Heart right ventricle (tissue), 16 donors: ENCODE measurements at regions of chr12 and their contacts with region 1.

Region 1: DNA sequence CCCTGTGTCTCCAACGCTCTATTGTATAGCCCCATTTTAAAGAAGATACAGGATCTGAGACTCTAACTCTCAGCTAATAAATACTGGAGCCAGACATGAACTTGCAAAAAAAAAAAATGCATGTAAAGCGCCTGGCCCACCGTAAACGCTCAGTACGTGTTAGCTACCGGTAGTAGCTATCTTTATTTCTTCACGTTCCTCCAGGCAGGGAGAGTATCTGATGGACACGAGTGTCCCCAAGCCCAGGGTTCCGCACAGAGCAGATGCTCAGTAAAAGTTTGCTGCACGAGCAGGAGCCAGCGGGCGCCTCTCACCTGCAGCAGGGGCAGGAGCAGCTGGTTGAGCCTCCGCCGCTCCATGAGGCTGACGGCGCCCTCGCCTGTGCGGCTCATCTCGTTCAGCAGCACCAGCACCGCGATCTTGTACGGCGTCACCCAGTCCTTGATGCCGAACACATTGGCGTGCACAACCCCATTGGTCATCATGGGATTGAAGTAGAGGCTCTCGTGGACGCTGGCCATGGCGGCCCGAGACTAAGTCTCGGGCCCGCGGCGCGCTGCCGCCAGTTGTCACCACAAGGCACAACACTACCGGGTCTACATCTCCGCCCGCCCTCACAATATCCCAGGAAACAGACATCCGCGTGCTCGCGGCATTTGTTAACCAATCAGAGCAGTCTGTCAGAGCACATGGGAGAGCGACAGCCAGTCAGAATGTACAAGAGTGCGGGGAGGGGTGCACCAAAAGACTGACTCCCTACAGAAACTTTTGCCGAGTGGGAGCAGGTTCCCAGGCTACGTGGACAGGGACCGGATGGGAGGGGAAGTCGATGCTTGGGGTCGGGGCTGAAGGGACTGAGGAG is at the start of gene ANAPC5:
- DNase-seq: peak; percentile 87 to 96
- ATAC-seq: peak; percentile 100
- H3K4me3 ChIP-seq: peak within 1 kb of the TSS; percentile 72 to 99 (median 92)
- H3K27ac ChIP-seq: peak within 1 kb of the TSS in 9 of 10 donors; percentile 65 to 89 (median 86)
- H3K4me1 ChIP-seq: peaks cover 0 to 34% (median 23%) of the 10 kb centered on the region in 9 donors
- H3K27me3 ChIP-seq: no peaks in the 10 kb centered on the region
- CTCF ChIP-seq: peak in 3 of 9 donors; percentile 5 to 21 (median 13)
- total RNA-seq, gene ANAPC5: 50.2 to 68.8 (median 55.8) TPM

Region 2: GRCh38 chr12:121296618-121297434 is 55.2 kb before region 1 on chr12 and contains the start of gene CAMKK2:
- intact Hi-C with region 1: no loop called
- DNase-seq: peak; percentile 84 to 88
- ATAC-seq: peak; percentile 92 to 96 (median 94)
- H3K4me3 ChIP-seq: peak within 1 kb of the TSS; percentile 89 to 100 (median 98)
- H3K27ac ChIP-seq: peak within 1 kb of the TSS; percentile 73 to 97 (median 92)
- H3K4me1 ChIP-seq: peaks cover 11 to 49% (median 28%) of the 10 kb centered on the region in 9 donors
- H3K27me3 ChIP-seq: no peaks in the 10 kb centered on the region
- CTCF ChIP-seq: peak in 5 of 9 donors; percentile 16 to 48 (median 43)
- total RNA-seq, gene CAMKK2: 14.7 to 19.3 (median 16.1) TPM

Region 3: GRCh38 chr12:121334513-121335343 is 17.3 kb before region 1 on chr12:
- intact Hi-C with region 1: no loop called
- DNase-seq: peak in 1 of 2 donors; percentile 26
- ATAC-seq: peak in 7 of 8 donors; percentile 58 to 85 (median 70)
- H3K4me3 ChIP-seq: no peak overlapping the region
- H3K27ac ChIP-seq: no peak overlapping the region
- H3K4me1 ChIP-seq: peaks cover 0 to 6% (median 0%) of the 10 kb centered on the region in 9 donors
- H3K27me3 ChIP-seq: no peaks in the 10 kb centered on the region
- CTCF ChIP-seq: peak; percentile 69 to 90 (median 86)

Region 4: DNA sequence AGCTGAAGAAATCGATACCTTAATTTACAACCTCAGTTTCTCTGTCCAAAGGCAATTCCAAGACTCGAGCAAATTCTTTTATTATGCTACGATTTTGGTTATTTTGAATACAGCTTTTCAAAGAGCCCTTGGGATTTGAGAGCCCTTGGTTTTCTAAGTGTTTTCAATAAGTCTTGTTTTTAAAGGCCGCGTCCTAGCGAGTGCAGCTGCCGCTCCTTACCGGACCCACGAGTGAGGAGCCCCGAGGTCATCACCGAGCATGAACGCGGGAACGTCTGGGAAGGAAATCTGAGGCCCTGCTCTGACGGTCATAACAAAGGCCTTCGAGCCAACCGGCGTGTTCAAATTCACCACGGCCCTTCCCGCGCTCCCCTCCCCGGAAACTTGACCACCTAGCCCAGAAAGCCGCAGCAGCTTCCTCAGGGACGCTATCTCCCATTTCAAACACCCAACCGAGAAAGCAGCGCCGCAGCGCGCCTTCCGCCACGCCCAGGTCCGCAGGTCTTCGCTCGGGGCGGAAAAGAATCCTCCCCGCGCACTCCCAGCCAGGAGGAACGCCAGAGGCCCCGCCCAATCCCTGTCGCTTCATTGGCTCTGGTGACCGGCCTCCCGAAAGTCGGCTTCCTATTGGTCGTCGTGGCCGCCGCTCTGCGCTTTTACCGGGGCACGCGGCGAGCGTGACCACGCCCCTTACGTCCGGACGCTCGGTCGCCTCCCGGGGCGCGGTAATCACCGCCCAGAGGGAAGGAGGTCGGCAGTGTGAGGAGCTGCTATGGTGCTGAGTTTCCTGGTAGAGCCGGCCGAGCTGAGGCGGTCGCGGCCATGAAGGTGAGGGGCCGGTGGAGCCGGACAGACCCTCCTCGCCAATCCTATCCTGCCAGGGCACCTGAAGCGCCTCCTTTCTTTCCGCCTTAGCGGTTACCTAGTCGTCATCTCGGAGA is 47.6 kb after region 1 on chr12 and contains the start of gene RNF34:
- intact Hi-C with region 1: loop called in 6 of 10 experiments (anchors 2 to 5 kb)
- DNase-seq: peak; percentile 99
- ATAC-seq: peak; percentile 99 to 100 (median 100)
- H3K4me3 ChIP-seq: peak within 1 kb of the TSS; percentile 81 to 99 (median 94)
- H3K27ac ChIP-seq: peak within 1 kb of the TSS; percentile 68 to 96 (median 92)
- H3K4me1 ChIP-seq: peaks cover 5 to 37% (median 25%) of the 10 kb centered on the region in 9 donors
- H3K27me3 ChIP-seq: no peaks in the 10 kb centered on the region
- CTCF ChIP-seq: peak in 2 of 9 donors; percentile 25 to 41
- total RNA-seq, gene RNF34: 21.6 to 37.9 (median 24.9) TPM

Region 5: DNA sequence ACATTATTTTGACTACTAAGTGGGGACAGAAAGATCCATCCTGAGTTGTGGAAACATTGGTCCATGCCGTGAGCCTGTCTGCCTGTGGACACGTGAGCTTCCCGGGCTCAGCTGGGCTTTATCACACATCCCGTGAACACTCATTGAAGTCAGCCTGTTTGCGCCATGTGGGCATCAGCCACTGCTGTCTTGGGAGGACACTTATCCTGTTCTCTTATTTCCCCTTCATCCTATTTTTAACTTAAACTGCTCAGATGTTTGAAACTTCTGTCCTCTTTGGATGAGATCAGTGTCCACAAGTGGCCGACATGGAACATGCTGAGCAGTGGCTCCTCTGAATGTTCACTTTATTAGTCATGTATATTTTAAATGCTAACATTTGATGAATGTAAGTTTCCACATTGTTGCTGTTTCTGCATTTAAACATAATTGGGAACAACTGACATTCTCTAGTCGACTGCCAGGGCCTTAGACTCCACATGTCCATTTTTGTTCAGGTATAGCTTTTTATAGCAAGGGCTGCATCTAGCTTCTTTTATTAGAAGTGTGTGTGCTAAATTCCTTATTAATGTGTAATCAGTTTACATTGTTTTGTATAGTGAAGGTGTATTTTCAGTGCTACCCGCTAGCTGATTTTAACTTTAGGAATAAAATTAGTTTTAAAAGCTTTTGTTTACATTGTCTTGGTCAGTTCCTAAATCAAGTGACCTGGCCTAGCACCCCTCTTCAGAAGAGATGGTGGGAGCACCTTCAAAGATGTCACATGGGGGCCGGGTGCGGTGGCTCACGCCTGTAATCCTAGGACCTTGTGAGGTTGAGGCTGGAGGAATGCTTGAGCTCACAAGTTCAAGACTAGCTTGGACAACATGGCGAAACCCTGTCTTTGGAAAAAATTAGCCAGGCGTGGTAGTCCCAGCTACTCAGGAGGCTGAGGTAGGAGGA is 71.9 kb after region 1 on chr12:
- intact Hi-C with region 1: no loop called
- DNase-seq: peak; percentile 29 to 55
- ATAC-seq: peak; percentile 60 to 96 (median 90)
- H3K4me3 ChIP-seq: no peak overlapping the region
- H3K27ac ChIP-seq: peak overlapping the region in 9 of 10 donors; percentile 36 to 79 (median 61)
- H3K4me1 ChIP-seq: peaks cover 0 to 36% (median 10%) of the 10 kb centered on the region in 9 donors
- H3K27me3 ChIP-seq: no peaks in the 10 kb centered on the region
- CTCF ChIP-seq: no peak

Region 6: DNA sequence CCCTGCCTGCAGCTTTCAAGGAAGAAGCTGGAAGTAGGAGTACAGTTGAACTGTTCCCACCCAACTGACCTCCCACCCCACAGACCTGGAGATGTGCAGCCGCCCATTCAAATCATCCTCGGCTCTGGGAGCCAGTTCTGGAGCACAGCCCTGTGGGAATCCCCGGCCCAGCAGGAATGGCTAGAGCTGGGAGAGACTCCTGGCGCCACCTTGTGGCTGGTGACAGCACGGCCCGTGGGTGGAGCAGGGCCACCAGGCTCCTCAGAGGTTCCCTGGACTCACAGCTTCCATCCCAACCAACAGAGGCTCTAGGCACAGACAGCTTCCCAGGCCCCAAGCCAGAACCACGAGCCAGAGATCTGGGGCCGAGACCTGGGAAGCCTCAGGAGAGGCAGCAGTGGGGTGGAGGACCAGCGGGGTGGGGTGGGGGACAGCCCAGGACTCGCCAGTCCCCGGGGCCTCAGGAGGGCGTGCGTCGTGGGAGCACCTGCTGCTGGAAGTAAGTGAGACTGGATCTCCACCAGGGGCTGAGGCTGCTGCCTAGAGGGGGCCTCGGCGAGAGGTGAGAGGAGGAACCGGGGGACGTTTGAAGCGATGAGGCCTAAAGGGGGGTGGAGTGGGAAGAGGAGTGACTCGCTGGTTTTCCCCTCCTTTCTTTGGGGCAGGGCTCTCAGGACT is 91.3 kb after region 1 on chr12:
- intact Hi-C with region 1: loop called in 1 of 10 experiments (anchors 5 kb)
- DNase-seq: peak; percentile 80 to 87
- ATAC-seq: peak; percentile 89 to 95 (median 92)
- H3K4me3 ChIP-seq: no peak overlapping the region
- H3K27ac ChIP-seq: no peak overlapping the region
- H3K4me1 ChIP-seq: peaks cover 0 to 10% (median 0%) of the 10 kb centered on the region in 9 donors
- H3K27me3 ChIP-seq: no peaks in the 10 kb centered on the region
- CTCF ChIP-seq: peak; percentile 68 to 93 (median 87)